ENCODE measurements at regions of chr11 and their contacts with region 1.

Region 1: DNA sequence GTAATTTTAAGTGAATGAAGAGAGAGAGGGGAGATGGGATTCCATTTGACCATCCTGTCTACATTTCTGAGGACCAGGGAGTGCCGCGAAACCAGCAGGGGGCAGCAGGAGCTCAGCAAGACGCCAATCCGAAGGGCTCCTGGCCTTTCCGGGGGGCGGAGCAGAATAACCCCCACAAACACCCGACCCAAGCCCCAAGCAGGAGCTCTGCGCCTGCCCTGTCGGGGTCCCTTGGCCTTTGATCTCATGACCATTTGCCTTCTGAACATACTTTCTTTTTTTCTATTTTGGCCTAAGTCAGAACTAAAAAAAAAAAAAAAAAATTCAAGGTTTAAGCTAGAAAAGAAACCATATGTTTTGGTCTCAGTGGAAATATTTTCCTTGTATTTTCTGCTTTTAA is 21.9 kb upstream of the SCN2B start:
- DNase-seq: no peak
- H3K4me3 ChIP-seq: no peak overlapping the region
- H3K27me3 ChIP-seq: peaks cover 8% of the 10 kb centered on the region
- CTCF ChIP-seq: peak; percentile 91

Region 2: DNA sequence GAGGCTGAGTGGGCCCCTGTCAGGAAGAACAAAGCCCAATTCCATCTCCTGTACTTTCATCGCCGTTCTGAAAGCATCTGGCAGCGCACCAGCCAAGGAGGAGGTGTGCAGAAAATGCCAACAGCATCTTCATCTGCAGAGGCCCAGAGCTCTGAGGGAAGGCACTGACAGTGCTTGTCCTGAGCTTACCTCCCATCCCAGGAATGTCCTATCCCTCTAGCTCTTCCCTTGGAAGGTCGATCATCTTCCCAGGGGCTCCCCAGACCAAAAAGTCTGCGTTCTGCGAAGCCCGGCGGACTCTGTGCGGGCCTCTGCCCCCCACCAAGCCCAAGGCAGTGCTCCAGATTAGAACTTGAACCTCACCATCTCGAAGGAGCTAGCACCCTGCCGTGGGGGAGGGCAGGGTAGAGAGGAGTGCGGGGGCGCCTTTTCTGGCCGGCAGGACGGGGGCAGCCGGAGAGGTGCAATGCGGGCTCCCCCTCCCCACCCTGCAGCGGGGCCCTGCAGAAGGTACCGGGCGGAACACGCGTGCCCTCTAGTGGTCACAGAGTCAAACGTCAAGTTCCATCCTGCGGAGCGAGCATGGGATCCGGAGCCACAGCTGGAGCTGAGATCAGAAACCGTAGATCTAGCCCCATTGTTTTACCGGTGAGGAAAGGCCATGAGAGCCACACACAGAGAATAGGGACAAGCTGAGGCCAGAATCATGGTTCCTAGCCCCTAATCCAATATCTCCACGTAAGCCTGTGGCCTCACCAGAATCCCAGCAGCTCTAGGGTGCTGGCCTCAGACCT is 26.9 kb before region 1 on chr11:
- CTCF ChIA-PET with region 1: interaction called, 12 read pairs
- POLR2A ChIA-PET with region 1: no interaction called
- DNase-seq: no peak
- H3K4me3 ChIP-seq: no peak overlapping the region
- H3K27me3 ChIP-seq: peaks cover 20% of the 10 kb centered on the region
- CTCF ChIP-seq: peak; percentile 93

Region 3: DNA sequence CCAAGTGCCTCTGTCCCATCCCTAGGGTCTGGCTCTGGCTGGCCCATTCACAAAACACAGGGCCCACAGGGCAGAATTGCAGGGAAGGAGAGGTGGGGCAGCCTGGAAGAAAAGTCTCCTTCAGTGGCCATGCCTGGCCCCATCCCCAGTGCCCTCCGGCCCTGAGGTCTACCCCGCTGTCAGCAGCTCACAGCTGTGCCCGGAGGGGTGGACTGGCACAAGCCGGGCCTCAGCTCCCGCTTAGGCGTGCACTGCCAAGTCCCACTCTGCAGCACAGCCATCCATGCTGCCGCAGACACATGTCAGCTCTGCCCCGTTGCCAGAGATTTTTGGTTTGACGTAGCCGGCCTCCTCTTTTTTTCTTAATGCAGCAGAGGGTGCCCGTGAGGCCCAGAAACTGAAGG is 18.1 kb before region 1 on chr11:
- CTCF ChIA-PET with region 1: interaction called, 11 read pairs
- POLR2A ChIA-PET with region 1: no interaction called
- DNase-seq: no peak
- H3K4me3 ChIP-seq: no peak overlapping the region
- H3K27me3 ChIP-seq: peaks cover 11% of the 10 kb centered on the region
- CTCF ChIP-seq: no peak

Region 4: DNA sequence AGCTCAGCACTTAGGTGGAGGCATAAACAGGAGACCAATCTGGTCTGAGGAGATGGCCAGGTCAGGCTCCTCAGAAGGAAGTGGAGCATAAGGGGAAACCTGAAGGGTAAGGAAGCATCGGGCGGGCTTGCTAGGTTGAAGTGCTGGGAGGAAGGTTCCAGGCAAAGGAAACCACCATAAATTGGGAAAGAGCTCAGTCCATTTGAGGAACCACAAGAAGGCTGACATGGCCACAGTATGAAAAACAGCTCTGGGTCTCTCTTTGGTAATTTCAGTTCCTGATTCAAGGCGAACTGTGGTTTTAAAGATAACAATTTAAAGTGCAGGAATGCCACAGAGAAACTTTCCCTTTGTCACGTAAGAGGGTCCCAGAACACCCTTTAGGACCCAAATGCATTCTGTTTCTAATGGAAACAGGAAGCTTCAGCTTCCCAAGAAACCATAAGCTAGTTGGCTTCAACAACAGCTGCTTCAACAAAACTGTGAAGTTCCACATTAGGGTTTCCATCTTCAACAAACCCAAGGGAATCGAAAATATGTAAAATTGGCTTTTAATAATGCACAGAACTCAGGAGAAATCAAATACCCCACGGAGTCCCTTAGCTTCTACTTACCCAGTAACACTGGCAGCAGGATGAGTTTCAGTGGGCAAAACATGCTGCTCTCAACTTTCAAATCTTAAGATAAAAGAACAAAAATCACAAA is 16.0 kb after region 1 on chr11:
- CTCF ChIA-PET with region 1: interaction called, 10 read pairs
- POLR2A ChIA-PET with region 1: no interaction called
- DNase-seq: no peak
- H3K4me3 ChIP-seq: no peak overlapping the region
- H3K27me3 ChIP-seq: peaks cover 10% of the 10 kb centered on the region; the same call in 1 of the 2 replicates
- CTCF ChIP-seq: no peak

Region 5: GRCh38 chr11:118321386-118322121 is 123.2 kb after region 1 on chr11:
- CTCF ChIA-PET with region 1: no interaction called
- POLR2A ChIA-PET with region 1: no interaction called
- DNase-seq: no peak
- H3K4me3 ChIP-seq: no peak overlapping the region
- H3K27me3 ChIP-seq: peaks cover 4% of the 10 kb centered on the region
- CTCF ChIP-seq: no peak

Region 6: DNA sequence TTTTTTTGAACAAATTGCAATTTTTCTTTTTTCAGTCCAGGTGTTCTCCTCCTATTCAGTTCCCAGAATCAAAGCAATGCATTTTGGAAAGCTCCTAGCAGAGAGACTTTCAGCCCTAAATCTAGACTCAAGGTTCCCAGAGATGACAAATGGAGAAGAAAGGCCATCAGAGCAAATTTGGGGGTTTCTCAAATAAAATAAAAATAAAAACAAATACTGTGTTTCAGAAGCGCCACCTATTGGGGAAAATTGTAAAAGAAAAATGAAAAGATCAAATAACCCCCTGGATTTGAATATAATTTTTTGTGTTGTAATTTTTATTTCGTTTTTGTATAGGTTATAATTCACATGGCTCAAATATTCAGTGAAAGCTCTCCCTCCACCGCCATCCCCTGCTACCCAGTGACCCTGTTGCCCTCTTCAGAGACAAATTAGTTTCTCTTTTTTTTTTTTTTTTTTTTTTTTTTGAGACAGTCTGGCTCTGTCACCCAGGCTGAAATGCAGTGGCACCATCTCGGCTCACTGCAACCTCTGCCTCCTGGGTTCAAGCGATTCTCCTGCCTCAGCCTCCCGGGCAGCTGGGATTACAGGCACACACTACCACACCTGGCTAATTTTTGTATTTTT is 154.8 kb after region 1 on chr11:
- CTCF ChIA-PET with region 1: interaction called, 13 read pairs
- POLR2A ChIA-PET with region 1: no interaction called
- DNase-seq: no peak
- H3K4me3 ChIP-seq: no peak overlapping the region
- H3K27me3 ChIP-seq: peaks cover 4% of the 10 kb centered on the region; the same call in 1 of the 2 replicates
- CTCF ChIP-seq: peak; percentile 47